Ascending aorta (tissue), 2 donors: ENCODE measurements at regions of chr11 and their contacts with region 1.

Region 1: GRCh38 chr11:72263361-72263760 is 19.4 kb upstream of the PHOX2A start:
- DNase-seq: no peak
- H3K4me3 ChIP-seq: no peak overlapping the region
- H3K27ac ChIP-seq: no peak overlapping the region
- H3K4me1 ChIP-seq: no peaks in the 10 kb centered on the region
- H3K27me3 ChIP-seq: no peaks in the 10 kb centered on the region
- CTCF ChIP-seq: no peak

Region 2: DNA sequence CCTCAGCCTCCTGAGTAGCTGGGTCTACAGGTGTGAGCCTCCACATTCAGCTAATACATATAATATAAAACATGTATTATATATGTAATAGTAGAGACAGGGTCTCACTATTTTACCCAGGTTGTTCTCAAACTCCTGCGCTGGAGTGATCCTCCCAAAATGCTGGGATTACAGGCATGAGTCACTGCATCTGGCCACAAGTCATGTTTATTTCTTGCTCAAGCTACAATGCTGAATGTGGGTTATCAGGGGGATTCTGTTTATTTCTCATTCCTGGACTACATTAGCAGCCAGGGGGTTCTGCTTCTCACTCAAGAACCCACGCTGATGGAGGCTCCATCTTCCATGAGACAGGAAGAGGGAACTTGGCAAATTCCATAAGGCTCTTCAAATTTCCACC is 103.0 kb before region 1 on chr11:
- intact Hi-C with region 1: loop called (anchors 10 kb)
- DNase-seq: no peak
- H3K4me3 ChIP-seq: no peak overlapping the region
- H3K27ac ChIP-seq: no peak overlapping the region
- H3K4me1 ChIP-seq: no peaks in the 10 kb centered on the region
- H3K27me3 ChIP-seq: no peaks in the 10 kb centered on the region
- CTCF ChIP-seq: no peak

Region 3: GRCh38 chr11:72222907-72223614 is 40.3 kb before region 1 on chr11:
- intact Hi-C with region 1: no loop called
- DNase-seq: peak; percentile 80 to 97
- H3K4me3 ChIP-seq: peak overlapping the region; percentile 93 to 99
- H3K27ac ChIP-seq: peak overlapping the region; percentile 96 to 97
- H3K4me1 ChIP-seq: peaks cover 6 to 18% of the 10 kb centered on the region in 2 donors
- H3K27me3 ChIP-seq: no peaks in the 10 kb centered on the region
- CTCF ChIP-seq: peak; percentile 17 to 24 (median 18)

Region 4: GRCh38 chr11:72293910-72294615 is 30.7 kb after region 1 on chr11:
- intact Hi-C with region 1: no loop called
- DNase-seq: no peak
- H3K4me3 ChIP-seq: no peak overlapping the region
- H3K27ac ChIP-seq: no peak overlapping the region
- H3K4me1 ChIP-seq: no peaks in the 10 kb centered on the region
- H3K27me3 ChIP-seq: no peaks in the 10 kb centered on the region
- CTCF ChIP-seq: no peak